ENCODE measurements at regions of chr1 and their contacts with region 1.

Region 1: GRCh38 chr1:115771847-115772457 is 3.4 kb upstream of the CASQ2 start:
- DNase-seq: peak; percentile 54
- H3K4me3 ChIP-seq: no peak overlapping the region
- H3K27ac ChIP-seq: no peak overlapping the region
- H3K27me3 ChIP-seq: peaks cover 10% of the 10 kb centered on the region
- CTCF ChIP-seq: peak; percentile 84

Region 2: GRCh38 chr1:115609021-115609420 is 162.9 kb before region 1 on chr1:
- CTCF ChIA-PET with region 1: interaction called, 52 read pairs
- POLR2A ChIA-PET with region 1: no interaction called
- DNase-seq: no peak
- H3K4me3 ChIP-seq: no peak overlapping the region
- H3K27ac ChIP-seq: no peak overlapping the region
- H3K27me3 ChIP-seq: peaks cover 16% of the 10 kb centered on the region
- CTCF ChIP-seq: no peak

Region 3: DNA sequence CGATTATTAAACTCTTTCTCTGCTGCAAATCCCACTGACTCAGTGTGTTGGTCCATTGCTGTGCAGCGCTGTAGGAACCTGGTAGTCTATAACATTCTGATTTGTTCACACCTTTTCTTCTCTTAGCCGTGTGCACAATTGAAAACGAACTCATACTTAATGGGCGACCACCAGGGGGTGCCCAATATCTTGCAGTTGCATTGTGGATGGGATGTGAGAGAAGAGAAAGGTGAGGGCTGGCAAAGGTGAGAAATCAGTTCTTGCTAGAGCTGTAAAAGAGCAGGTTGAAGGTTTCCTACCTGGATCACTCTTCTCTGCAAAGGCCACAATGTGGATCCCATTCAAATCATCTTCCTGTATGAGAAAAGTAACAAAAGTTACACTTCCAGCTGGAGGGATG is 54.4 kb before region 1 on chr1:
- CTCF ChIA-PET with region 1: interaction called, 81 read pairs
- POLR2A ChIA-PET with region 1: no interaction called
- DNase-seq: no peak
- H3K4me3 ChIP-seq: no peak overlapping the region
- H3K27ac ChIP-seq: no peak overlapping the region
- H3K27me3 ChIP-seq: peaks cover 5% of the 10 kb centered on the region
- CTCF ChIP-seq: peak; percentile 53

Region 4: DNA sequence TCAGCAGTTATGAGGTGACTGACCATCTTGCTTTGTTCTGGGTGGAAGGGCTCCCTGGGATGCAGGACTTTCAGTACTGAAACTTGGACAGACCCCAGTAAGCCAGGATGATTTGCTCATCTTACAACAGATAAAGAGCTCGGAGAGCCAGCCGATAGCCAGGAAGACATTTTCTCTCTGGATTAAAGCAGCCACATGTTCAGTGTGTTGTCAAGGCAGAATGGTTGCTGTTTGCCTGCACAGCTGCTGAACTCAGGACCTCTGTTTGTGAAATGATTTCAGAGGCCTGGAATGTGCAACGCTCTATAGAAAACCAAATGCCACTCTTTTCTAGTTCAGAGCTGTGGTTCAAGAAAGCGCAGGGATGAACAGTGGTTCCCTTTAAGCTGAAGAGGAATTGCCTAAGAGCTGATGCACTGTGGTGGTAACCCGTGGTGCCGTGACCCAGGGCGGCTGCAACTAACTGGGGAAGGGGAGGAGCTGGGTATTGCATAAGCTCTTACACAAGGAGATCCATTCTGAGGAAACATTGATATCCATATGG is 44.2 kb before region 1 on chr1:
- CTCF ChIA-PET with region 1: interaction called, 13 read pairs
- POLR2A ChIA-PET with region 1: no interaction called
- DNase-seq: peak; percentile 66
- H3K4me3 ChIP-seq: no peak overlapping the region
- H3K27ac ChIP-seq: peak overlapping the region; percentile 32
- H3K27me3 ChIP-seq: no peaks in the 10 kb centered on the region
- CTCF ChIP-seq: no peak

Region 5: DNA sequence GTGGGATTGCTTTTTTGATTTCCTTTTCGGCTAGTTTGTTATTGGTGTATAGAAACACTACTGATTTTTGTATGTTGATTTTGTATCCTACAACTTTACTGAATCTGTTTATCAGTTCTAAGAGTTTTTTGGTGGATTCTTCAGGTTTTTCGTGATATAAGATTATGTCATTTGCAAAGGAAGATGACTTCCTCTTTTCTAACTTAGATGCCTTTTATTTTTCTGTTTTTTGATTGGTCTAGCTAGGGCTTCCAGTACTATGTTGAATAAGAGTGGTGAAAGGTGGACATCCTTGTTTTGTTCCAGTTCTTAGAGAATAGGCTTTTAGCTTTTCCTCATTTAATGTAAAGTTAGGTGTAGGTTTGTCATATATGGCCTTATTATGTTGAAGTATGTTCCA is 82.1 kb after region 1 on chr1:
- CTCF ChIA-PET with region 1: no interaction called
- POLR2A ChIA-PET with region 1: no interaction called
- DNase-seq: no peak
- H3K4me3 ChIP-seq: no peak overlapping the region
- H3K27ac ChIP-seq: no peak overlapping the region
- H3K27me3 ChIP-seq: no peaks in the 10 kb centered on the region
- CTCF ChIP-seq: no peak

Region 6: DNA sequence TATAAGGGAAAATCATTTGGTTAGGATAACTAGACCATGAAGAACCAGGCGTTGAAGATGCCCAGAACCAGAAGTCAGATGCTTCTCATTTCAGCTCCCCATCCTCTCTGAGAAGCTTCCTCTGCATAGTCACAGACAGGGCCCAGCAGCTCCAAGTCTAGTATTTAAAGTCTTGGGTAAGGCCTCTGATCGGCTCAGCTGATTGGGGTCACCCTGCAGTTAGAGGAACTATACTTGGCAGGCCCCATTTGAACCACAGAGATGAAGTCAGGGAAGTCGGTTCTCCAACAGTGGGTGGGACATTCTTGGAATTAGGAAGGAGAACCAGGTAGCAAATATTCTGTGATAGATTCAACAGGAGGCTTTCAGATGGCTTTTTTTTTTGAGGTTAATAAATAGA is 252.7 kb after region 1 on chr1:
- CTCF ChIA-PET with region 1: no interaction called
- POLR2A ChIA-PET with region 1: no interaction called
- DNase-seq: no peak
- H3K4me3 ChIP-seq: no peak overlapping the region
- H3K27ac ChIP-seq: no peak overlapping the region
- H3K27me3 ChIP-seq: no peaks in the 10 kb centered on the region
- CTCF ChIP-seq: no peak

Measured in AG04450 (cell line).